Dorsolateral prefrontal cortex (tissue), 120 donors: ENCODE measurements at regions of chrX and their contacts with region 1.

Region 1: DNA sequence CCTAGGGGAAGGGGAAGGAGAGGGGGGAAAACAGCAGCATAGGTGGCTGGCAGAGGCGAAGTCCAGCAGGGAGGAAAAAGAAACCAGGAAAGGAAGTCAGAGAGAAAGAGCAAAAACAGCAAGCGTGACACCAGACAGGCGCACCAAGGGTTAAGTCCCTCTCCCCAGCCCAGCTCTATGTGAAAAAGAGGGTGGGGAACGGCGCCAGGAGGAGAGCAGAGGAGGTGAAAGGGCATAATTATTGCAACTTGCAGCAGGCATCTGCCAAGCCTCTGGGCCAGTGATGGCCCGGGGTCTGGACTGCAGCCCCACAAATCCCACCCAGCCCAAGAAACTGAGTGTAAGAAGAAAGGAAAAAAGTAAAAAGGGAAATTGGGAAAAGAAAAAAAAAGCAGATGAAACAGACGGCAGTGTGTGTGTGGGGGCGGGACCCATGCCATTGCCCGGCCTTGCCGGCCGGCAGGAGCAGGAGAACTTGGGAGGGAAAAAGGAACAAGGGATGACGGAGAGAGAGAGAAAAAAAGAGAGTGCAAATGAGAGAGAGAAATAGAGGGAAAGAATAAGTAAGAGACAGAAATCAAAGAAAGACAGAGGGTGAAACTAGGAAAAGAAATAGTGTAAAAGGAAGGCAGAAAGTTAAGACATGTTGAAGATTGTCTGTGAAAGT is 14.1 kb upstream of the RHOXF2 start:
- DNase-seq: no peak
- H3K4me3 ChIP-seq: peak overlapping the region in 17 of 59 donors; percentile 5 to 38 (median 19)
- H3K27ac ChIP-seq: no peak overlapping the region
- H3K27me3 ChIP-seq: peaks cover 0 to 55% (median 15%) of the 10 kb centered on the region in 45 donors
- CTCF ChIP-seq: no peak

Region 2: DNA sequence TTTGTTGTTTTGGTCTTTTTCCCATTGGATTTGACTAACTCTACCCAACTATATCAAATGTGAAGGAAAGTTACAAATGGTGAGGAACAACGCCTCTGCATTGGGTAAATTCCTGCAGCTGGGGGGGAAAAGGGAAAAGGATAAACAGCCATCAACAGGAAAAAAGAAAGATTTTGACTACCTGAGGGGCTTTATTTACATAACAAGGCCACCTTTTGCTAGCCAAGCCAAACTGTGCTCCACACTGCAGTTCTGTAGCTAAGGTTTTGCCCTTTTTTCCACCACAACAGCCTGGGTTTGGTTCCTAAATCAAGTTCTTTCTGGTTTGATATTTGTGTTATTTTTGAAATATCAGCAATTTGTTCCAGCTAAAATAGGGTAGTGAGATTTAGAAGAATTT is 107.6 kb before region 1 on chrX:
- intact Hi-C with region 1: loop called in 1 of 2 experiments (anchors 10 kb)
- DNase-seq: no peak
- H3K4me3 ChIP-seq: no peak overlapping the region
- H3K27ac ChIP-seq: no peak overlapping the region
- H3K27me3 ChIP-seq: peaks cover 0 to 33% (median 4%) of the 10 kb centered on the region in 45 donors
- CTCF ChIP-seq: no peak